Left colon (tissue), 2 donors: ENCODE measurements at regions of chr15 and their contacts with region 1.

Region 1: GRCh38 chr15:59492389-59493377 is 54.7 kb downstream of the FAM81A start:
- DNase-seq: peak; percentile 33 to 67
- ATAC-seq: peak; percentile 99

Region 2: GRCh38 chr15:58966698-58967097 is 526.0 kb before region 1 on chr15:
- intact Hi-C with region 1: loop called in 1 of 2 experiments (anchors 5 kb)
- DNase-seq: no peak
- ATAC-seq: no peak

Region 3: GRCh38 chr15:59174835-59175831 is 317.6 kb before region 1 on chr15:
- intact Hi-C with region 1: loop called in 1 of 2 experiments (anchors 10 kb)
- DNase-seq: peak; percentile 52 to 69
- ATAC-seq: peak; percentile 96

Region 4: GRCh38 chr15:59247364-59247763 is 245.3 kb before region 1 on chr15:
- intact Hi-C with region 1: loop called in 1 of 2 experiments (anchors 10 kb)
- DNase-seq: peak; percentile 53 to 79
- ATAC-seq: peak; percentile 77

Region 5: GRCh38 chr15:59437817-59438562 is 54.7 kb before region 1 on chr15 and contains the start of gene FAM81A:
- intact Hi-C with region 1: loop called in 1 of 2 experiments (anchors 10 kb)
- DNase-seq: peak; percentile 80 to 84
- ATAC-seq: peak; percentile 84
- total RNA-seq, gene FAM81A: 9.0 to 9.2 TPM